ENCODE measurements at regions of chr3 and their contacts with region 1.

Region 1: GRCh38 chr3:53891497-53892285 is at the start of gene SELENOK:
- DNase-seq: peak; percentile 98
- H3K4me3 Mint-ChIP-seq: peak within 1 kb of the TSS; percentile 98
- H3K27ac Mint-ChIP-seq: peak within 1 kb of the TSS; percentile 99
- H3K4me1 Mint-ChIP-seq: peaks cover 62% of the 10 kb centered on the region
- H3K27me3 Mint-ChIP-seq: peaks cover 27% of the 10 kb centered on the region
- total RNA-seq, gene SELENOK: 56.4 and 57.2 TPM in 2 replicates

Region 2: DNA sequence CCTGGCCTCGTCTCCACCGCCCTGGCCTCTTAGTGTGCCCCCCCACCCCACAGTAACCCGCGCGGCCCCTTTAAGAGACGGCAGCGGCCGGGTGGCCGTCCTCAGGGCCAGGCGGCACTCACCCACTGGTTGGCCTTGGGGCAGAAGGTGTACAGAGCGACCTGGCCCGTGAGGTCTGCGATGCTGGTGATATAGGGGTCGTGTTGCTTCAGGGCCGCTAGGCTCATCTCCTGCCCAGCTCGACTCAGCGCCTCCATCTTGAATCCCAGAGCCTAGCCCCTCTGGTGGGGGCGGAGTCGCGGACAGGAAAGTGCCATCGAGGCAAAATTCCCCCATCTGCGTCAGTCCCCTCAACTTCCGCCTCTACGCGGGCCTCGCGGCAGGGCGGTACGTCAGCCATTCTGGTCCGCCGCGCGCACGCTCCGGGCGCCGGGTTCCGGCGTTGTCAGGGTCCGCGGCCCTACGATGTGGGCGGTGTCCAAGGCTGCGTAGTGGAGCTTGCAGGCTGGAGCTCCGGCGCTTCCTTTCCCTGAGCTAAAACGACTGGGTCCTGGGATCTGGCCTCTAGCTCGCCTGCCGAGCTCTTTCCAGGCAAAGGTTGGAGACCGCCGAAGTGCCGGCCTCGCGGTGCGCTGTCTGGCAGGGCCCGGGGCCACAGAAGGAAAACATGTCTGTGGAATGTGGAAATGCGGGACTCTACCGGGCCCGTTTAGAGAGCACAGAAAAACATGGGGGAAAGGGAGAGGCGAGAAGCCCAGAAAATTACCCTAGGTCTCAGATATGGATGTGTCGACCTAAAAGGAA is 544.2 kb before region 1 on chr3 and contains the start of gene DCP1A:
- intact Hi-C with region 1: loop called (anchors 1 kb)
- DNase-seq: peak; percentile 96
- H3K4me3 Mint-ChIP-seq: peak within 1 kb of the TSS; percentile 98
- H3K27ac Mint-ChIP-seq: peak within 1 kb of the TSS; percentile 98
- H3K4me1 Mint-ChIP-seq: peaks cover 37% of the 10 kb centered on the region
- H3K27me3 Mint-ChIP-seq: no peaks in the 10 kb centered on the region
- total RNA-seq, gene DCP1A: 46.3 and 48.6 TPM in 2 replicates

Region 3: DNA sequence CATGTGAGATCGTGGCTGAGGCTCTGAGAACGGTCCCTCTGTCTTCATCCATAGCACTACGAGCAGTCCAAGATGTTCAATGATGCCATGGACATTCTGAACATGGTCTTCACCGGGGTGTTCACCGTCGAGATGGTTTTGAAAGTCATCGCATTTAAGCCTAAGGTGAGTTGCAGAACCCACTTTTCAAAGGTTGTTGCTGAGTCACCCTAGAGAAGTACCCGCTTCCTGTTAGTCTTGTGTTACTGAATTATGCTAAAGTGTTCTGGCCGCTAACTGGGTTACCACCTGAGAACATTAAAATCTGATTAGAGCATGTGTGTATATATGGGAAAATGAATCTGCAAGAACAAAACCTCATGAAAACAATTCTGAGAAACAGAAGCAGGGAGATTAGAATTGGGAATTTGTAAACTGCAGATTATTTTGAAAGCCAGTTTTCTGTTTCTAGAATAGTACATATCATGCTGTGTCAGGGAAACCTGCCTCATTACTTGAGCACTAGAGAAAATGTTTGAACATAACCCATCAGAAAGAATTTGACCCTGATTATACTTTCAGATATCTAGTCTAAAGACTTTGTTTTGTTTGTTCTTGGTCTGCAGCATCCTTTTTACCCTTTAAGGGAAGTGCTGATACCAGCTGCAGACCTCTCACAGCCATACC is 138.0 kb before region 1 on chr3:
- intact Hi-C with region 1: loop called (anchors 5 kb)
- DNase-seq: peak; percentile 32
- H3K4me3 Mint-ChIP-seq: peak overlapping the region; percentile 29
- H3K27ac Mint-ChIP-seq: peak overlapping the region; percentile 76
- H3K4me1 Mint-ChIP-seq: peaks cover 43% of the 10 kb centered on the region
- H3K27me3 Mint-ChIP-seq: peaks cover 2% of the 10 kb centered on the region

Region 4: DNA sequence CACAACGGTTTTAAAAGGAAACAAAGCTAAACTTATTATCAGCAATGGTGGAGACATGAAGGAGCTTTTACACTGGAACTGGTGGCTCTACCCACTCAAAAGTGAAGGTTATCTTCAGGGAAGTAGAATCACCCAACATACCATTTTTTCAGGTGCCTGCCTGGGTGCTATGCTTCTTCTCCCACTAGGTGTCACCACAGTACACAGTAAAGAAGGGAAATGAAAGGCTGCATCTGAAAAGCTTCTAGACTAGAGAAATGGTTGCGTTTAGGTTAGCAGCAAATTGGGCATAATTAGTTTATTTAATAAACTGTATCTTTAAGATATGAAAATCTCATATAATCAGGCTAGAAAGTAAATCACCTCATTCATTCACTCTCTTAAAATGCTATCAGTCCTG is 47.0 kb after region 1 on chr3:
- intact Hi-C with region 1: no loop called
- DNase-seq: peak; percentile 12
- H3K4me3 Mint-ChIP-seq: no peak overlapping the region
- H3K27ac Mint-ChIP-seq: no peak overlapping the region
- H3K4me1 Mint-ChIP-seq: no peaks in the 10 kb centered on the region
- H3K27me3 Mint-ChIP-seq: no peaks in the 10 kb centered on the region

Region 5: GRCh38 chr3:53949541-53949940 is 57.9 kb after region 1 on chr3:
- intact Hi-C with region 1: no loop called
- DNase-seq: no peak
- H3K4me3 Mint-ChIP-seq: no peak overlapping the region
- H3K27ac Mint-ChIP-seq: no peak overlapping the region
- H3K4me1 Mint-ChIP-seq: no peaks in the 10 kb centered on the region
- H3K27me3 Mint-ChIP-seq: peaks cover 2% of the 10 kb centered on the region

Measured in activated T-helper 1 cell treated with anti-CD3 and anti-CD28 coated beads, Interleukin-12 subunit alpha, Interleukin-12 subunit beta, Interleukin-2, Interleukin-4 antibody, amounts not matched to agents 30 ng/mL and 10 ng/mL and 1 ng/mL, durations not matched to agents 14 hours and 24 hours and 36 hours (primary cell).